Motor neuron (in vitro differentiated cells): ENCODE measurements at regions of chr16 and their contacts with region 1.

Region 1: GRCh38 chr16:21708533-21709115 is 44.9 kb downstream of the OTOA start:
- ATAC-seq: peak in 3 of 8 experiments; percentile 49 to 57 (median 54)
- H3K4me3 ChIP-seq: no peak overlapping the region
- H3K27ac ChIP-seq: no peak overlapping the region
- H3K4me1 ChIP-seq: no peaks in the 10 kb centered on the region

Region 2: GRCh38 chr16:21302898-21303528 is 405.6 kb before region 1 on chr16:
- in situ Hi-C with region 1: no loop called
- ATAC-seq: peak in 2 of 8 experiments; percentile 35 to 38
- H3K4me3 ChIP-seq: peak overlapping the region in 1 of 5 donors; percentile 51
- H3K27ac ChIP-seq: no peak overlapping the region
- H3K4me1 ChIP-seq: no peaks in the 10 kb centered on the region

Region 3: GRCh38 chr16:21599233-21600030 is 109.2 kb before region 1 on chr16 and contains the start of gene METTL9:
- in situ Hi-C with region 1: loop called in 3 of 9 experiments (anchors 25 kb)
- ATAC-seq: peak; percentile 92 to 97 (median 94)
- H3K4me3 ChIP-seq: peak within 1 kb of the TSS; percentile 72 to 92 (median 82)
- H3K27ac ChIP-seq: peak within 1 kb of the TSS; percentile 92 to 93
- H3K4me1 ChIP-seq: peaks cover 19 to 29% of the 10 kb centered on the region in 2 donors
- total RNA-seq, gene METTL9: 33.6 to 124 (median 113) TPM